Gastrocnemius medialis (tissue), 4 donors: ENCODE measurements at regions of chr20 and their contacts with region 1.

Region 1: DNA sequence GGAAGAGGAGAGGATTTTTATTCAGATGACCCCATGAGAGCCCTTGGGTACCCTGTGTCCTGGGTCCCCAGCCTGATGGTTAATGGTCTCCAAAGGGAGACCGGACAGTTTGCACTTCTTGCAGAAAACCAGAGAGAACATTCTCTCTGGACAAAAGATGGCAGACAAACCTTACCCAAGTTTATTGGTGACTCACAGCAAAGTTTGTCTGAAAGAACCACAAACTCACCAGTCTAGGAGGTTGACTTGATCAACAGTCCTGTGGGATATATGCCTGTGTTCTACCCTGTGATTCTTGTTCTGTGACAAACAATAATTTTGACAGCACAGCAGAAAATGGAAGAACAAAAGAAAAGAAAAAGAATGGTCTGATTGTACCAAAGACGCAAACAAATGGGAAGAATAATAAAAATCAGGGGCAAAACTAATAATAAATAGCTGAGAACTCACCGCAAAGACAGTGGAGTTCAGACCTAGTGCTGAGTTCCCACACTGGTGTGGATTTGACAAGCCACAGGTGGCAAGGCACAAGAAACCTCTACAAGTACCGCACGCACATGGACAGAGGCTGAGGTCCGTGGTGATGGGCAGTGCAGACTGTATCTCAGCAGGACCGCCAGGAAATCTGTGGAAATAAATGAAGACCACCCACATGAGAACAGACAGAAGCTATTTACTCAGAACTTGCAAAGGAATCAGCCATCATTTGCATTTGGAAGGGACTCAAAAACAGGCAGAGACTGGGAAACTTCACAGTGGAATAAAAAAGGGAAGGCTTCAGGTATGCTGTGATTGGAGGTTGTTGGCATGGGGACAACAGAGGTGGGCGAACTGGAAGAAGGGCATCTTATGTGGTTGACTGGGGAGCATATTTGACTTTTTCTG is 246.2 kb upstream of the RNF24 start:
- DNase-seq: no peak
- ATAC-seq: no peak
- H3K4me3 ChIP-seq: no peak overlapping the region
- H3K27ac ChIP-seq: no peak overlapping the region
- H3K4me1 ChIP-seq: no peaks in the 10 kb centered on the region
- H3K27me3 ChIP-seq: no peaks in the 10 kb centered on the region
- CTCF ChIP-seq: no peak
- POLR2A ChIP-seq: no peak

Region 2: GRCh38 chr20:4217349-4217773 is 44.2 kb before region 1 on chr20:
- in situ Hi-C with region 1: no loop called
- intact Hi-C with region 1: no loop called
- DNase-seq: no peak
- ATAC-seq: peak in 1 of 2 donors; percentile 27
- H3K4me3 ChIP-seq: no peak overlapping the region
- H3K27ac ChIP-seq: no peak overlapping the region
- H3K4me1 ChIP-seq: no peaks in the 10 kb centered on the region
- H3K27me3 ChIP-seq: peaks cover 15 to 17% (median 15%) of the 10 kb centered on the region in 3 donors
- CTCF ChIP-seq: no peak
- POLR2A ChIP-seq: no peak

Region 3: DNA sequence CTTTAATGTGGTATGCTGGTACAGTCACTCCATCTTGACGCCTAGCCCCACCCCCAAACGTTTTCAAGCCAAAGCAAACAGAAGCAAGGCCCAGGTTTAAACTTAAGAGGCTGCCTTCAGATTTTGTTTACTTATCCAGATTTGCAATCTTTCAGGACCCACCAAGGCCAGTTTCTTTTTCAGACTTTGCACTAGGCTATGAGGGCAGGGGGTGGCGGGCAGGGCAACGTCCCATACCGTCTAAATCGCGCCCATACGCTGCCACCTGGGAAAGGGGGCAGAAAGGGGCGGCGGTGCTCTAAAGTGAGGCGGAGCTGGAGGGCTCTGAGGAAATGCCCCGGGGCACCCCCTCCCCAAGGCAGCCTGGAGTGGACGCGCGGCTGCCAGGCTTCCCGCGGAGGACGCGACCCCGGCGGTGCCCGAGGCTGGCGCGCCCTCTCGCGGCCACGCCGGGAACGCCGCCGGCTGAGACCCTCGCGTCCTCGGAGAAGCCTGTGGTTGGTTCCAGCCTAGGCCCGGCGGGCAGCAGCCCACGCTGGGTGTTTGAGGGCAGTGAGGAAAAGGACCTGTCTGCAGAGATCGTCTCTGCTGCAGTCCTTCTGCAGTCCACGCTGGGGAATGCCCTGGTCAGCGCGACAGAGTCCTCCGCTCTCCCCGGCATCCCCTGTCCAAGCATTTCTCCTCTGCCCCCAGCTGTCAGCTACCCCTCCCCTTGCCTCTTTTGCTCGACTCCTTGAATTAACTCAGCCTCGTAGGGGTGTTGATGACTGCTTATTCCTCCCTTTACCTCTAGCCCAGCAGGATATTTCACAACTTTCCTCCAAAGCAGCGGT is 331.0 kb after region 1 on chr20:
- in situ Hi-C with region 1: loop called in 1 of 4 experiments (anchors 25 kb)
- intact Hi-C with region 1: no loop called
- DNase-seq: no peak
- ATAC-seq: no peak
- H3K4me3 ChIP-seq: peak overlapping the region; percentile 29 to 55 (median 30)
- H3K27ac ChIP-seq: no peak overlapping the region
- H3K4me1 ChIP-seq: no peaks in the 10 kb centered on the region
- H3K27me3 ChIP-seq: peaks cover 0 to 18% (median 0%) of the 10 kb centered on the region in 3 donors
- CTCF ChIP-seq: peak; percentile 44 to 85 (median 65)
- POLR2A ChIP-seq: no peak